CD8-positive, alpha-beta T cell (primary cell): ENCODE measurements at regions of chr22 and their contacts with region 1.

Region 1: GRCh38 chr22:20763630-20764470 is 10.1 kb upstream of the SERPIND1 start:
- DNase-seq: no peak
- ATAC-seq: no peak
- H3K4me3 ChIP-seq: no peak overlapping the region
- H3K4me3 Mint-ChIP-seq: no peak overlapping the region
- H3K27ac ChIP-seq: no peak overlapping the region
- H3K27ac Mint-ChIP-seq: no peak overlapping the region
- H3K4me1 ChIP-seq: no peaks in the 10 kb centered on the region
- H3K4me1 Mint-ChIP-seq: peaks cover 1% of the 10 kb centered on the region
- H3K27me3 ChIP-seq: no peaks in the 10 kb centered on the region
- H3K27me3 Mint-ChIP-seq: no peaks in the 10 kb centered on the region
- CTCF ChIP-seq: no peak

Region 2: GRCh38 chr22:20566420-20567260 is 197.2 kb before region 1 on chr22:
- CTCF ChIA-PET with region 1: no interaction called
- POLR2A ChIA-PET with region 1: no interaction called
- intact Hi-C with region 1: no loop called
- DNase-seq: peak; percentile 57 to 93 (median 85)
- ATAC-seq: peak; percentile 60
- H3K4me3 ChIP-seq: peak overlapping the region in 1 of 2 experiments; percentile 24
- H3K4me3 Mint-ChIP-seq: peak overlapping the region; percentile 65
- H3K27ac ChIP-seq: peak overlapping the region; percentile 50 to 75
- H3K27ac Mint-ChIP-seq: peak overlapping the region; percentile 96
- H3K4me1 ChIP-seq: peaks cover 90% of the 10 kb centered on the region
- H3K4me1 Mint-ChIP-seq: peaks cover 89% of the 10 kb centered on the region
- H3K27me3 ChIP-seq: no peaks in the 10 kb centered on the region
- H3K27me3 Mint-ChIP-seq: no peaks in the 10 kb centered on the region
- CTCF ChIP-seq: no peak

Region 3: GRCh38 chr22:20750461-20751184 is 13.2 kb before region 1 on chr22:
- CTCF ChIA-PET with region 1: no interaction called
- POLR2A ChIA-PET with region 1: no interaction called
- intact Hi-C with region 1: loop called in 1 of 2 experiments (anchors 1 kb)
- DNase-seq: peak in 4 of 9 experiments; percentile 17 to 51 (median 37)
- ATAC-seq: no peak
- H3K4me3 ChIP-seq: no peak overlapping the region
- H3K4me3 Mint-ChIP-seq: no peak overlapping the region
- H3K27ac ChIP-seq: no peak overlapping the region
- H3K27ac Mint-ChIP-seq: no peak overlapping the region
- H3K4me1 ChIP-seq: no peaks in the 10 kb centered on the region
- H3K4me1 Mint-ChIP-seq: no peaks in the 10 kb centered on the region
- H3K27me3 ChIP-seq: no peaks in the 10 kb centered on the region
- H3K27me3 Mint-ChIP-seq: no peaks in the 10 kb centered on the region
- CTCF ChIP-seq: no peak

Region 4: GRCh38 chr22:21102659-21103267 is 338.9 kb after region 1 on chr22:
- CTCF ChIA-PET with region 1: no interaction called
- POLR2A ChIA-PET with region 1: no interaction called
- intact Hi-C with region 1: no loop called
- DNase-seq: peak; percentile 60 to 82 (median 75)
- ATAC-seq: peak; percentile 90
- H3K4me3 ChIP-seq: no peak overlapping the region
- H3K4me3 Mint-ChIP-seq: no peak overlapping the region
- H3K27ac ChIP-seq: no peak overlapping the region
- H3K27ac Mint-ChIP-seq: no peak overlapping the region
- H3K4me1 ChIP-seq: peaks cover 5% of the 10 kb centered on the region
- H3K4me1 Mint-ChIP-seq: peaks cover 7% of the 10 kb centered on the region
- H3K27me3 ChIP-seq: no peaks in the 10 kb centered on the region
- H3K27me3 Mint-ChIP-seq: peaks cover 20% of the 10 kb centered on the region
- CTCF ChIP-seq: peak; percentile 70